H1 (cell line): ENCODE measurements at regions of chr6 and their contacts with region 1.

Region 1: GRCh38 chr6:96837081-96837971 is at the start of gene GPR63:
- DNase-seq: peak; percentile 61 to 86
- H3K4me3 ChIP-seq: peak within 1 kb of the TSS; percentile 76 to 95 (median 90)
- H3K27ac ChIP-seq: peak within 1 kb of the TSS; percentile 59; the same call in 1 of the 2 replicates
- H3K4me1 ChIP-seq: peaks cover 0 to 6% (median 2%) of the 10 kb centered on the region in 4 experiments; a peak in 3 of 7 replicates
- H3K27me3 ChIP-seq: peaks cover 3 to 13% (median 6%) of the 10 kb centered on the region in 4 experiments; a peak in 5 of 7 replicates
- CTCF ChIP-seq: no peak
- EP300 ChIP-seq: no peak
- POLR2A ChIP-seq: peak; percentile 47 to 80
- RAD21 ChIP-seq: peak in 1 of 2 experiments; percentile 1; a peak in 1 of 4 replicates
- total RNA-seq, gene GPR63: 11.3 and 11.6 TPM in 2 replicates

Region 2: GRCh38 chr6:96816301-96816817 is 21.0 kb before region 1 on chr6:
- CTCF ChIA-PET with region 1: no interaction called
- POLR2A ChIA-PET with region 1: interaction called, 10 read pairs
- DNase-seq: no peak
- H3K4me3 ChIP-seq: no peak overlapping the region; a peak in 1 of 8 replicates
- H3K27ac ChIP-seq: no peak overlapping the region
- H3K4me1 ChIP-seq: peaks cover 0 to 5% (median 1%) of the 10 kb centered on the region in 4 experiments; a peak in 3 of 7 replicates
- H3K27me3 ChIP-seq: no peaks in the 10 kb centered on the region
- CTCF ChIP-seq: no peak
- EP300 ChIP-seq: no peak
- POLR2A ChIP-seq: no peak
- RAD21 ChIP-seq: no peak

Region 3: GRCh38 chr6:96963809-96964208 is 126.5 kb after region 1 on chr6:
- CTCF ChIA-PET with region 1: no interaction called
- POLR2A ChIA-PET with region 1: no interaction called
- DNase-seq: no peak
- H3K4me3 ChIP-seq: no peak overlapping the region
- H3K27ac ChIP-seq: no peak overlapping the region
- H3K4me1 ChIP-seq: peaks cover 0 to 3% (median 0%) of the 10 kb centered on the region in 4 experiments; a peak in 1 of 7 replicates
- H3K27me3 ChIP-seq: no peaks in the 10 kb centered on the region
- CTCF ChIP-seq: no peak
- EP300 ChIP-seq: no peak
- POLR2A ChIP-seq: no peak
- RAD21 ChIP-seq: no peak